Lower leg skin (tissue), 4 donors: ENCODE measurements at regions of chr16 and their contacts with region 1.

Region 1: DNA sequence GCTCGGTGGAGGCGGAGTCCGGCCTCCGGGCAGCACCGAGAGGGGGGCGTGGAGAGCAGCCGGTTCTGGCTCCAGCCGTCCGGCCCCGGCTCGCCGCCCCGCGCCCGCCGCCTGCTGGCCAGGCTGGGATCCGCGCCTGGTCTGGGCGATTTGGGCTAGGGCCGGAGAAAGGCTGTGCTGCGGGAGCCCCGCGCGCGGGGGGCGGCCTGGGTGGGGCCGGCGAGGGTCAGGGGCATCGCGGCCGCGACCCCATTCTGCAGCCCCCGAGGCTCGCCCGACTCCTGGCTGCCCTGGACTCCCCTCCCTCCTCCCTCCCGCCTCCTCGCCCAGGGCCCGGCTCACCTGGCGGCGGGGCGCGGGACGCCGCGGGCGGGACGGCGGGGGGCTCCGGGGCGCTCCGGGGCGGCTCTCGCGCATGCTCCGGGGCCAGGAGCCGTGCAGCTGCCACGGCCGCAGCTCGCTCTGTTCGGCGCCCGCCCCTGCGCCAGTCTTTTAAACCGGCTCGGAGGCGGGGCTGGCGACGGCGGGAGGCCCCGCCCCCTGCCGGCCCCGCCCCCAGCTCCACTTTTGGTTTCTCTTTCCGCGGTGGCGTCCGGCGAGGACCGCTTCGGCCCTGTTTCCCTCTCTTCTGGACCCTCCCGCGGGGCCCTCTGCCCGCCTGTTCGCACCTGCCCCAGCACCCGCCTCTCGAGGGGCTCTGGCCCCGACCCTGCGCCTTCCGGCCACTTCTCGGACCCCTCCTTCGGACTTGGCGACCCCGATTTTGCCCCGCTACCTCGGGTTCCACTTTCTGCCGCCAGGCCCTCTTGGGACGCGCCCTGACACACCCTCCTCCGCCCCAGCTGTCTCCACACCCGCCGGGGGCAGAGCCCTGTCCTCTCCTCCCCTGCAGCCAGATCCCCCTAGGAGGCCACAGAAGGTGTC is at the start of gene SOCS1:
- DNase-seq: peak; percentile 80 to 96
- H3K4me3 ChIP-seq: peak within 1 kb of the TSS; percentile 74
- CTCF ChIP-seq: peak in 1 of 3 donors; percentile 45
- POLR2A ChIP-seq: peak in 1 of 2 donors; percentile 96
- total RNA-seq, gene SOCS1: 7.7 to 20.6 (median 10.1) TPM

Region 2: DNA sequence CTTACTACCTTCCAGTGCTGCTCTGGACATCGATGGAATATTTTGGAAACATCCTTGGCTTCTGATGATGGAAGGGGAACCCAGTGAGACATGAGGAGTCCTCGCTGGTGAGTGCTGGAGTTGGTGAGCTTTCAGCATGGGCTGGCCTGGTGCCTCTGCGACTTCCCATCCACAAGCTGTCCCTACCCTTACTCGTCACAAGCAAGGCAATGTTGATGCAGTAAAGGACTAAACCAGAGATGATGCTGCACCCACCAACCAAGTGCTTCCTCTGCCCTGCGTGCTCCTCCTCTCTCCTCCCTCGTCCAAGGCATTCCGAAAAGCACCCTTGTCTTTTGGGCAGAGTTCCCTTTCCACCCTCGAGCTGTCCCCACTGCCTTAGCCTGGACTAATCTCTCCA is 1228.4 kb before region 1 on chr16:
- intact Hi-C with region 1: loop called (anchors 5 kb)
- DNase-seq: no peak
- H3K4me3 ChIP-seq: no peak overlapping the region
- CTCF ChIP-seq: no peak
- POLR2A ChIP-seq: no peak

Region 3: DNA sequence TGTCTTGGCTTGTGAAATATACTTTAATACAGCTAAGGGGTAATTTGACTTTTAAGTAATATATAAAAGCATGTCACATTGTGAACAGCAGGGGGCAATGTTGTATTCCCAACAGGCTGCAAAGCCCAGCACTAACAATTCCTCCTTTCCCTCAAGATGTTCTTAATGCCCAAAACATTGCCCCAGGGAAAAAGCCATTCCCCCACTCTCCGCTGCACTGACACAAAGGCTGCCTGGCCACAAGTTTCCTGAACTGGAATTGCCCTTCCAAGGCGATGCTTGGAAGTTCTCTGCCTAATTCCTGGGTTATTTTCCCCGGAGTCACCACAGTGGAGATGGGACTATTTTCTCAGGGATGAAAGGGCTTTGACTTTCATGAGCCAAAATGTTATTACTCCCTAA is 284.4 kb before region 1 on chr16:
- intact Hi-C with region 1: loop called (anchors 5 kb)
- DNase-seq: peak in 1 of 2 donors; percentile 78
- H3K4me3 ChIP-seq: no peak overlapping the region
- CTCF ChIP-seq: peak in 1 of 3 donors; percentile 36
- POLR2A ChIP-seq: no peak

Region 4: DNA sequence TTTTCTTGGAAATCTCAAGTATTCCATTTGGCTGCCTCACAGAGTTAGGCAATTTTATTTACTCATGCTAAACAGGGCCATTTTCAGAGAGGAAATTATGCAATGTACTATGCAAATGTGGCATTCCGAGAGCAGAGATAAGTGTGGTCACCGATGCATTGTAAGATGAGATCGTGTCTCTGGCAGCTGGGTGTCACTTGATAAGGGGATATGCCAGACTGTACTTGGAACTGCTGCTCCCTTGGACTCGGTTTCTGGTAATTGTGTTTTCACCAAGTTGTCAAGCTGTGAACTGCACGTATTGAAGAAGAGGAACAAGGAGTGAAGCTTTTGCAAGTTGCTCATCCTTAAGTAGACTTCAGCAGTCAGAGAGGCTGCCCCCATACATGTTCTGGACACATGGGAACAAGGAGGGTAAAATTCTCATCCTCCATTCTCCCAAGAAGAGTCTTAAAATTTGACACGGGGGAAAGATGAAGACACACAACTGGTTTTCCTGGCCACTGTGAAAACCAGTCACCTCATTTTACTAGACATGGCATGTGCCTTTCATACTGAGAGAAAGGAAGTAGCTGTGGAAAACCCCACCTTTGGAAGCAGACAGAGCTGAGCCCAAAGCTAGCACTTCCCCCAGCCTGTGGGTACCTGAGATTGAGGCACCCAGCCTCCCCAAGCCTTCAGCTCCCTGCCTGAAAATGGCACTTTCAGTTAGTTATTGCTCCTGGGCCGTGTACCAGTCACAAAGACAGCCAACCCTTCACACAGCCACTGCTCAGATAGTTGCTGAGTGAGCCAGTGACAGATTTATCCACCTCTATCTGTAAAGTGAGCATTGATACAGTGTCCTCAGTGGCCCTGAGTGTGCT is 150.7 kb before region 1 on chr16:
- intact Hi-C with region 1: loop called (anchors 10 kb)
- DNase-seq: peak in 1 of 2 donors; percentile 58
- H3K4me3 ChIP-seq: no peak overlapping the region
- CTCF ChIP-seq: no peak
- POLR2A ChIP-seq: no peak